Ovary (tissue), 10 donors: ENCODE measurements at regions of chr3 and their contacts with region 1.

Region 1: DNA sequence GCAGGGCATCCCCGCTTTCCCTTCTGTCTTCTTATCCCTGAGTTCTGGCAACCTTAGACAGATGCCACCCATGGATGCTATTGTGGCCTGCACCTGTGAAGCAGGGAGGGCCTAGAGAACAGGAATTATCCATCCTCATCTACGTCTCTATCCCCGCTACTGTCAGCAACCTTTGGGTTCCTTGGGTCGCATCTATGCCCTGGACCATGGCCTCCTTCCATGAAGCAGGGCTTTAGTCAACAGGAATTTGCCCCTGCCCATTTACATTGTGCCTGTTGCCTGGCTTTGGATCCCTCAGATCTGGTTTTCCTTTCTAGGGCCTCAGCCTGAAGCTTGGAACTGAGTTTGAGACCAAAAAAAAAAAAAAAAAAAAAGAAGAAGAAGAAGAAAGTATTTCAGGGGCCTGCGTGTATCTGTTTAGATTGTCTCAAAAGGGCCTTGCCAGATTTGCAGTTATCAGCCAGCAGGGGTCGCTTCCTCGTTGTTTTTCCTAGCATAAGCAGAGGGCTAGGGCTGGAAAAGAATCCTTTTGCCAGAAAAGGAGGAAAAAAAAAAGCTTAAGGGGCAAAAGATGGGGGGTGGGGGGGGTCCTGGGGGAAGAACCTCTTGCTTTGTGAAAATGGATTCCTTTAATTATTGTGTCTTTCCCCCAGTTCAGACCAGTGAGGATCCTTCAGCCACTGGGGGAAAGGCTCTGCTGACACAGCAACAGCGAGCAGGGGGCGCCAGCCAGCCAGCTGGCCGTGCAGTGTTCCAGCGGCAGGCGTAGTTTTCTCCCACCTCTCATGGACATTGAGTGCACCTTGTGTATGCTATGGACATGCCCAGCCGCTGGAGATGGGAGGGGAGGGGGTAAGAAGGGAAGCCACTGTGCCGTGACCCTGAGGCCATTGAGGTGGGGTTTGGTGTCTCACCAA is 65.7 kb upstream of the ALDH1L1 start:
- DNase-seq: peak in 3 of 5 donors; percentile 68 to 77 (median 75)
- H3K4me3 ChIP-seq: no peak overlapping the region
- H3K27ac ChIP-seq: no peak overlapping the region
- H3K4me1 ChIP-seq: no peaks in the 10 kb centered on the region
- H3K27me3 ChIP-seq: no peaks in the 10 kb centered on the region
- CTCF ChIP-seq: peak in 1 of 3 donors; percentile 19
- EP300 ChIP-seq: no peak
- POLR2A ChIP-seq: no peak

Region 2: DNA sequence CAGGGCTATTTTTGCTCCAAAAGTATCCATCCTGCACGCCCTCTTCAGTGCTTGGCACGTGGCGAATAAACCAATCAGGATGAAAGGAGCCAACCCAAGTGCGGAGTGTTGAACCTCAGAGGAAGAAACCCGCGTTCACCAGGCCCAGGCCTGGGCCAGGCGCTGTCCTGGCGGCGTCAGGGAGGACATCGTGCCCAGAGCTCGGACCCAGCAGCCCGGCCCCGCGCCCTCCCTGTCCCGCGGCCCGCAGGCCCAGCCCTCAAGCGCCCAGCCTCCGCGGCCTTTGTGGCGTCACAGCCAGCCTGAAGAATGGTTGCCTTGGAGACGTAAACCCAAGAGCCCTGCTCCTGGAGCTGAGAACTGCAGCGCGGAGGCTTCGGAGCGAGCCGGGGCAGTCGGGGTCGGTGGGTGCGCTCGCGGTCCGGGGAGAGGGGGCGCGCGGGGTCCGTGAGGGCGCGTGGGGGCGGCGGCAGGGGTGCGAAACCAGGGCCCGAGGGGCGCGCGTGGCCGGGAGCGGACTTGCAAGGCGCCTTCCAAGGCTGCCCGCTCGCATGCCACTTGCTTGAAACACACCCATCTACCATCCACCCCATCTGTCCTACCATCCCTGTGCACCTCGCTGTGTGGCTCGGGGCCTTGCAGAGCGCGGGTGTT is 148.6 kb after region 1 on chr3 and contains the start of gene CFAP100:
- intact Hi-C with region 1: loop called in 1 of 4 experiments (anchors 5 kb)
- DNase-seq: peak; percentile 43 to 74 (median 59)
- H3K4me3 ChIP-seq: peak within 1 kb of the TSS; percentile 1
- H3K27ac ChIP-seq: no peak within 1 kb of the TSS
- H3K4me1 ChIP-seq: peaks cover 3% of the 10 kb centered on the region
- H3K27me3 ChIP-seq: no peaks in the 10 kb centered on the region
- CTCF ChIP-seq: no peak
- EP300 ChIP-seq: no peak
- POLR2A ChIP-seq: no peak
- total RNA-seq, gene CFAP100: 1.5 to 21.3 (median 1.7) TPM in 5 of 7 donors, not detected in the others